H1 (cell line): ENCODE measurements at regions of chr6 and their contacts with region 1.

Region 1: GRCh38 chr6:131627724-131628682 is at the start of gene MED23:
- DNase-seq: peak; percentile 95 to 100
- H3K4me3 ChIP-seq: peak within 1 kb of the TSS; percentile 79 to 92 (median 83)
- H3K27ac ChIP-seq: peak within 1 kb of the TSS; percentile 41; the same call in 1 of the 2 replicates
- H3K4me1 ChIP-seq: no peaks in the 10 kb centered on the region
- H3K27me3 ChIP-seq: no peaks in the 10 kb centered on the region
- CTCF ChIP-seq: peak; percentile 96 to 100 (median 99)
- EP300 ChIP-seq: peak; percentile 44 to 87
- POLR2A ChIP-seq: peak in 1 of 2 experiments; percentile 85; a peak in 2 of 3 replicates
- RAD21 ChIP-seq: peak; percentile 92 to 96
- total RNA-seq, gene MED23: 13.0 and 13.8 TPM in 2 replicates

Region 2: DNA sequence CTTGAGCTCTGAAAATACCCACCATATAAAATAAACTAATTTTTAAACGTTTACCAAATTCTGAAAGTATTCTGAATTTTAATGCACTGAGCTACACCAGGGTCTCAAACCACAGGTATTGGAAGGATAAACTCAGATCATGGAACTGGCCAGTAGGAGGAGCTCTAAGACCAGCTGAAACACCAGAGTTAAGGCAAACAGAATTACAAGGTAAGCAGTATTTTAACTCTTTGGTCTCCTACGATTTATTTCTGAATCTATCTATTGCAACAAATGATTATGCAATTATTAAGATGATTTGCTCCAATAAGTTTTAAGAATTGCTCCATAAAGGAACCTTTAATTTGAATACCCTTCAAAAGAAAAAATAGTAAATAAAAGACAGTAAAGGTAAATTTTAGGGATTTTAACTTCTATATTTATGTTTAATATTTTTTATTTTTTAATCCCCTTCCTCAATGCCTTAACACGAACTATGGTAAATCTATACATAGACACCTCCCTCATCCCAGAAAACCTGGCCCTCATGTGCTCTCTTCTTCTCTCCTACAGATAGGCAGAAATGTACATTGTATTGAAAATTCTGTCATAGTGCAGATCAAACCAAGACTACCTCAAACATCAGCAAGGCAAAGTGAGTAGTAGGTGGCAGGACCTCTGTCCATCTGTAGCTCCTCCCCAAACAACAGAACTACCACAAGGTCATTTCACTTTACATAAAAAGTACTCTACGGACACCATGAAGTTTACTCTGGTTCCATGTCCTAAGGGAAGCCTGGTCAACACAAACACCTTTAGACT is 742.4 kb before region 1 on chr6:
- CTCF ChIA-PET with region 1: interaction called, 10 read pairs
- POLR2A ChIA-PET with region 1: interaction called, 4 read pairs
- DNase-seq: peak in 1 of 2 experiments; percentile 78
- H3K4me3 ChIP-seq: no peak overlapping the region
- H3K27ac ChIP-seq: no peak overlapping the region
- H3K4me1 ChIP-seq: no peaks in the 10 kb centered on the region
- H3K27me3 ChIP-seq: no peaks in the 10 kb centered on the region
- CTCF ChIP-seq: peak in 2 of 3 experiments; percentile 83 to 86; a peak in 3 of 4 replicates
- EP300 ChIP-seq: no peak
- POLR2A ChIP-seq: no peak
- RAD21 ChIP-seq: peak; percentile 98 to 100

Region 3: GRCh38 chr6:131492932-131493573 is 134.9 kb before region 1 on chr6:
- CTCF ChIA-PET with region 1: no interaction called
- POLR2A ChIA-PET with region 1: no interaction called
- DNase-seq: no peak
- H3K4me3 ChIP-seq: no peak overlapping the region
- H3K27ac ChIP-seq: no peak overlapping the region
- H3K4me1 ChIP-seq: peaks cover 0 to 3% (median 0%) of the 10 kb centered on the region in 4 experiments; a peak in 1 of 7 replicates
- H3K27me3 ChIP-seq: no peaks in the 10 kb centered on the region
- CTCF ChIP-seq: no peak
- EP300 ChIP-seq: no peak
- POLR2A ChIP-seq: no peak
- RAD21 ChIP-seq: no peak

Region 4: DNA sequence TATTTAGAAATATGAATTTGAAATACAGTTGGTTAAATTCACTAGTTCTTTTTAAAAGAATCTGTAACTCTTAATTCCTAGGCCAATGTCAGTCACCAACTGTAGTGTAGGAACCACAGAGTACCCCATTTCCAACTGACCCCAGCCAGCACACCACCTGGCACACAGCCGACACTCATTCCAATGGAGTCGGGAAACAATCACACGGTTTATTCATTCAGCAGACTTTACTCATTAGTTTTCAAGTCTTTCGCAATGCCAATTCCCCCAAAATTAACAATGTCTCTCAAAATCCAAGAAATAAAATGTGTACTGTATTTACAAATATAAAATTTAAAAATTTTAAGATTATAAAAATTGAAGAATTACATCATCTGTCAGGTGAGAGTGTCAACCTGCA is 41.5 kb before region 1 on chr6:
- CTCF ChIA-PET with region 1: interaction called, 11 read pairs
- POLR2A ChIA-PET with region 1: no interaction called
- DNase-seq: no peak
- H3K4me3 ChIP-seq: no peak overlapping the region
- H3K27ac ChIP-seq: no peak overlapping the region
- H3K4me1 ChIP-seq: no peaks in the 10 kb centered on the region
- H3K27me3 ChIP-seq: no peaks in the 10 kb centered on the region
- CTCF ChIP-seq: no peak
- EP300 ChIP-seq: no peak
- POLR2A ChIP-seq: no peak
- RAD21 ChIP-seq: no peak

Region 5: GRCh38 chr6:131615275-131615674 is 12.7 kb before region 1 on chr6:
- CTCF ChIA-PET with region 1: interaction called, 25 read pairs
- POLR2A ChIA-PET with region 1: interaction called, 6 read pairs
- DNase-seq: no peak
- H3K4me3 ChIP-seq: no peak overlapping the region
- H3K27ac ChIP-seq: no peak overlapping the region
- H3K4me1 ChIP-seq: no peaks in the 10 kb centered on the region
- H3K27me3 ChIP-seq: no peaks in the 10 kb centered on the region
- CTCF ChIP-seq: no peak
- EP300 ChIP-seq: no peak
- POLR2A ChIP-seq: no peak
- RAD21 ChIP-seq: no peak

Region 6: DNA sequence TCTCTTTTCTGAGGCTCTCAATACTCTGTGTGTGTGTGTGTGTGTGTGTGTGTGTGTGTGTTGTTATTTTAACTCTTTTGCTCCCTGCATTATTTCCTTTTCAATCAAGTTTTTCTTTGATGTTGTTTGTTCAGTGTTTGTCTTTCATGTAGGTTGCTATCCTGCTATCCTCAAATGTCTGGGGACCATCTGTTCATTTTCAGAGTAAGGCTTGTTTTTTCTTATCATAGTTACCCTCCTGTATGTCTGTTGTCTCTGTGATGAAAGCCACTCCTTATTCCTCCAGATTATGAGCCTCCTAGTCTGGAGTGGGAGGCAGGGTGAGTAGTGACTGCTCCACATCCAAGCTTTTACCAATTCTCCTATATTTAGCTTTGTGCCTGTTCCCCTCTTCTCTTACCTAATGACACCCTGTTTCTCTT is 18.3 kb after region 1 on chr6:
- CTCF ChIA-PET with region 1: interaction called, 26 read pairs
- POLR2A ChIA-PET with region 1: no interaction called
- DNase-seq: no peak
- H3K4me3 ChIP-seq: no peak overlapping the region
- H3K27ac ChIP-seq: no peak overlapping the region
- H3K4me1 ChIP-seq: no peaks in the 10 kb centered on the region
- H3K27me3 ChIP-seq: no peaks in the 10 kb centered on the region
- CTCF ChIP-seq: no peak
- EP300 ChIP-seq: no peak
- POLR2A ChIP-seq: no peak
- RAD21 ChIP-seq: no peak

Region 7: GRCh38 chr6:131657630-131658111 is 29.7 kb after region 1 on chr6:
- CTCF ChIA-PET with region 1: interaction called, 21 read pairs
- POLR2A ChIA-PET with region 1: no interaction called
- DNase-seq: no peak
- H3K4me3 ChIP-seq: no peak overlapping the region
- H3K27ac ChIP-seq: no peak overlapping the region
- H3K4me1 ChIP-seq: no peaks in the 10 kb centered on the region
- H3K27me3 ChIP-seq: no peaks in the 10 kb centered on the region; a peak in 1 of 7 replicates
- CTCF ChIP-seq: no peak
- EP300 ChIP-seq: no peak
- POLR2A ChIP-seq: no peak
- RAD21 ChIP-seq: no peak

Region 8: GRCh38 chr6:131683479-131683878 is 55.5 kb after region 1 on chr6:
- CTCF ChIA-PET with region 1: no interaction called
- POLR2A ChIA-PET with region 1: no interaction called
- DNase-seq: no peak
- H3K4me3 ChIP-seq: no peak overlapping the region
- H3K27ac ChIP-seq: no peak overlapping the region
- H3K4me1 ChIP-seq: peaks cover 0 to 4% (median under 1%) of the 10 kb centered on the region in 4 experiments; a peak in 2 of 7 replicates
- H3K27me3 ChIP-seq: no peaks in the 10 kb centered on the region
- CTCF ChIP-seq: no peak
- EP300 ChIP-seq: no peak
- POLR2A ChIP-seq: no peak
- RAD21 ChIP-seq: no peak